Sigmoid colon (tissue), 7 donors: ENCODE measurements at regions of chr9 and their contacts with region 1.

Region 1: GRCh38 chr9:132800038-132800648 is 77.9 kb downstream of the AK8 start:
- DNase-seq: peak; percentile 86
- H3K4me3 ChIP-seq: no peak overlapping the region
- H3K27ac ChIP-seq: no peak overlapping the region
- H3K4me1 ChIP-seq: peaks cover 0 to 7% (median 3%) of the 10 kb centered on the region in 4 donors
- H3K27me3 ChIP-seq: peaks cover 0 to 25% (median 0%) of the 10 kb centered on the region in 3 donors
- CTCF ChIP-seq: peak; percentile 77 to 90 (median 85)
- EP300 ChIP-seq: no peak
- POLR2A ChIP-seq: no peak

Region 2: DNA sequence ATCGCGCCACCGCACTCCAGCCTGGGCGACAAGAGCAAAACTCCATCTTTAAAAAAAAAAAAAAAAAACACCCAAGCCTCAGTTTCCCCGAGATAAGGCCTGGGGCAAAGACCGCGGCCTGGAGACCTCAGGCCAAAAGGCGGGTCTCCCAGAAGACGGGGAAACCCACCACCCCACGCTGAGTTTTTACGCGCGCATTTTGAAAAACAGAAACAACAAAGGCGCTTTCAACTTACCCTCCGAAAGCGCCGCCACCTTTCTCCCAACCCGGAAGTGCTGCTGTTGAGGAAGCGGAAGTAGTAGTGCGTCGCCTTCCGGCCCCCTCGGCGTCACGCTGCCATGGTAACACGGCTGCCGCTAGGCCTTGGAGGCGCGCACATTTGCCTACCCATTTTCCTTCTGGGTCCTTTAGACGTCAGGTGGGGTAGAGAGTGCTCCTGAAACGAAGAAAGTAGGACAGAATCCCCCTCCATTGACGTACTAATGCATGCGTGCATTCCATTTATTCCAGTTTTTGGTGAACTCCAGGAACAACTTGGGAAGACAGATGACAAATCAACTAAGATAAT is 393.5 kb before region 1 on chr9 and contains the start of gene TTF1:
- intact Hi-C with region 1: loop called (anchors 10 kb)
- DNase-seq: peak; percentile 95
- H3K4me3 ChIP-seq: peak within 1 kb of the TSS; percentile 64 to 78 (median 70)
- H3K27ac ChIP-seq: peak within 1 kb of the TSS; percentile 23 to 57 (median 54)
- H3K4me1 ChIP-seq: peaks cover 0 to 38% (median 35%) of the 10 kb centered on the region in 4 donors
- H3K27me3 ChIP-seq: peaks cover 13 to 26% (median 23%) of the 10 kb centered on the region in 3 donors
- CTCF ChIP-seq: no peak
- EP300 ChIP-seq: no peak
- POLR2A ChIP-seq: no peak
- total RNA-seq, gene TTF1: 8.9 to 20.9 (median 14.2) TPM

Region 3: GRCh38 chr9:132507746-132508469 is 292.2 kb before region 1 on chr9:
- intact Hi-C with region 1: loop called (anchors 5 kb)
- DNase-seq: peak; percentile 72
- H3K4me3 ChIP-seq: no peak overlapping the region
- H3K27ac ChIP-seq: no peak overlapping the region
- H3K4me1 ChIP-seq: no peaks in the 10 kb centered on the region
- H3K27me3 ChIP-seq: peaks cover 0 to 72% (median 17%) of the 10 kb centered on the region in 3 donors
- CTCF ChIP-seq: peak; percentile 70 to 73 (median 71)
- EP300 ChIP-seq: no peak
- POLR2A ChIP-seq: no peak

Region 4: GRCh38 chr9:132669698-132670456 is 130.3 kb before region 1 on chr9 and contains the start of gene DDX31:
- intact Hi-C with region 1: loop called (anchors 2 kb)
- DNase-seq: peak; percentile 94
- H3K4me3 ChIP-seq: peak within 1 kb of the TSS; percentile 78 to 86 (median 80)
- H3K27ac ChIP-seq: peak within 1 kb of the TSS; percentile 93 to 98 (median 94)
- H3K4me1 ChIP-seq: peaks cover 0 to 44% (median 38%) of the 10 kb centered on the region in 4 donors
- H3K27me3 ChIP-seq: no peaks in the 10 kb centered on the region
- CTCF ChIP-seq: no peak
- EP300 ChIP-seq: no peak
- POLR2A ChIP-seq: peak in 1 of 2 donors; percentile 12
- total RNA-seq, gene DDX31: 5.7 to 7.7 (median 7.1) TPM

Region 5: GRCh38 chr9:132769906-132770810 is 30.0 kb before region 1 on chr9:
- intact Hi-C with region 1: loop called (anchors 2 kb)
- DNase-seq: peak; percentile 76
- H3K4me3 ChIP-seq: peak overlapping the region; percentile 56 to 84 (median 69)
- H3K27ac ChIP-seq: peak overlapping the region; percentile 76 to 87 (median 86)
- H3K4me1 ChIP-seq: peaks cover 0 to 21% (median 18%) of the 10 kb centered on the region in 4 donors
- H3K27me3 ChIP-seq: no peaks in the 10 kb centered on the region
- CTCF ChIP-seq: no peak
- EP300 ChIP-seq: no peak
- POLR2A ChIP-seq: no peak

Region 6: GRCh38 chr9:132823370-132824145 is 23.4 kb after region 1 on chr9:
- intact Hi-C with region 1: no loop called
- DNase-seq: peak; percentile 35
- H3K4me3 ChIP-seq: no peak overlapping the region
- H3K27ac ChIP-seq: no peak overlapping the region
- H3K4me1 ChIP-seq: no peaks in the 10 kb centered on the region
- H3K27me3 ChIP-seq: no peaks in the 10 kb centered on the region
- CTCF ChIP-seq: no peak
- EP300 ChIP-seq: no peak
- POLR2A ChIP-seq: no peak

Region 7: GRCh38 chr9:132901856-132902831 is 102.0 kb after region 1 on chr9:
- intact Hi-C with region 1: loop called (anchors 5 kb)
- DNase-seq: peak; percentile 82
- H3K4me3 ChIP-seq: no peak overlapping the region
- H3K27ac ChIP-seq: peak overlapping the region in 2 of 4 donors; percentile 45 to 57
- H3K4me1 ChIP-seq: peaks cover 0 to 3% (median 0%) of the 10 kb centered on the region in 4 donors
- H3K27me3 ChIP-seq: no peaks in the 10 kb centered on the region
- CTCF ChIP-seq: peak; percentile 87 to 97 (median 92)
- EP300 ChIP-seq: no peak
- POLR2A ChIP-seq: no peak

Region 8: GRCh38 chr9:133090187-133090586 is 290.0 kb after region 1 on chr9:
- intact Hi-C with region 1: no loop called
- DNase-seq: no peak
- H3K4me3 ChIP-seq: no peak overlapping the region
- H3K27ac ChIP-seq: no peak overlapping the region
- H3K4me1 ChIP-seq: no peaks in the 10 kb centered on the region
- H3K27me3 ChIP-seq: no peaks in the 10 kb centered on the region
- CTCF ChIP-seq: no peak
- EP300 ChIP-seq: no peak
- POLR2A ChIP-seq: no peak